ENCODE measurements at regions of chr5 and their contacts with region 1.

Region 1: DNA sequence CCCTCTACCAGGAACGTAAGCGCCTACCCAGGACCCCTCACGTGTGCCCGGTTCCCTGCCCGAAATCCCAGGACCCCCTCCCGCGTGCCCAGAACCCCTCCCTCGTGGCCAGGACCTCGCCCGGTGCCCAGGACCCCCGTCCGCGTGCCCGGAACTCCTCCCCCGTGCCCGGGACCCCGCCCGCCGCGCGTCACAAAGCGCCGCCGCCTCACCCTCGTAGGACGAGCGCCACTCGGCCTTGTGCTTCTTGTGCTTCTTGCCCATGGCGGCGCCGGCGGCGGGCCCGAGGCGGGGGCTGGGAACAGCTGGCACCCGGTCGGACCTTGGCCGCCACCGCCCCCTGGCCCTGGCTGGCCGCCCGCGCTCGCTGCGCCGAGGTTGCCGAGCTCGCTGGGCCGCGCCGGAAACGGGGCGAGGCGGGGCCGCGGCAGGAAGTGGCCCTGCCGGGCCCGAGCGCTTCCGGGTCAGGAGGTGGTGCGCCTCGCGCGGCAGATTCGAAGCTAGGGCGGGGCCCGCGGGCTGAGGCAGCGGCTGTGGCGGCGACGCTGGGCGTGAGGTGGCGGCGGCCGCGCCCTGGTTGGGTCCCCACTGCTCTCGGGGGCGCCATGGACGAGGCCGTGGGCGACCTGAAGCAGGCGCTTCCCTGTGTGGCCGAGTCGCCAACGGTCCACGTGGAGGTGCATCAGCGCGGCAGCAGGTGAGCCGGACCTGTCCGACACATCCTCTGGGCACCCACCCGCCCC is at the starts of genes BRD9 and TRIP13:
- DNase-seq: peak; percentile 96
- H3K4me3 Mint-ChIP-seq: peak within 1 kb of the TSS; percentile 88
- H3K27ac Mint-ChIP-seq: peak within 1 kb of the TSS; percentile 92
- H3K4me1 Mint-ChIP-seq: peaks cover 21% of the 10 kb centered on the region
- H3K27me3 Mint-ChIP-seq: no peaks in the 10 kb centered on the region
- total RNA-seq, gene BRD9: 80.6 and 82.0 TPM in 2 replicates
- total RNA-seq, gene TRIP13: 47.5 and 52.6 TPM in 2 replicates

Region 2: DNA sequence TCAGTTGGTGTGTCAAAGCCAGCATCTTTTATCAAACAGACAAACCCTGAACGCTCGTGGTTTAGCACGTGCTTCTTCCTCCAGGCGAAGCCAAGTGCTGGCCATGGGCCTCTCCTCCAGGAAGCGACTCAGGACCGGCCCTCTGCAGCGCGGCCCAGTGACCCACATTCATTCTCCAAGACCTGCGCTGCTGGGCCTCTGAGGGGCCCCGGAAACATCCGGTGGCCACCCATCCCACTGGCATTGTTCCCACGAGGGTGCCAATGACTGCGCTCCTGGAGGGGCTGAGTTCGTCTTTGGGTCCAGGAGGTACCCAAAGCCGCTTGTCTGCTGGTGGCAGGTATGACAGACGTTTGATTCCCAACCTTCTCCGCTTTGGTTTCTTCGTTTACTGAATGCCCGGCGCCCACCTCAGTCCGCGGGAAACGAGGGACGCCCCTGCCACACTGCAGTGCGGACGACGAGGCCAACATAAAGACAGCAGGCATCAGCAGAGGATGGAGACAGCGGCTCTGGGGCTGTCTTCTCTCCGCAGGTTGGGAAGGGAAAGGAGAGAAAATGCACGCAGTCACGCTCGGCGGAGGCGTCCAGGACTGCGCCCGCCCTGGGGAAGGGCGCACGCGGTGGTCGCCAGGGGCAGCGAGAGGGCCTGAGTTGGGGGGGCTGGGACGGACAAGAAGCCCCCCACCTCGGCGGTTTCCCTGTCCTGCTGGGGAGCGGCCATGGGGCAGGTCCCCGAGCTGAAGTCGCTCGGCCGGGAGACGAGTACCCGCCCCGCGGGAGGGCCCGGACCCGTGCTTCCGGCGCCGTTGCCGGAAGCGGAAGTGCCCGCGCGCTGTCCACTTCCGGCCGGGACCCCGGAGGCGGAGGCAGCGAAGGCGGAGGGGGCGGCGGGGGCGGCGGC is 450.0 kb before region 1 on chr5 and contains the start of gene EXOC3:
- intact Hi-C with region 1: loop called (anchors 10 kb)
- DNase-seq: peak; percentile 95
- H3K4me3 Mint-ChIP-seq: peak within 1 kb of the TSS; percentile 98
- H3K27ac Mint-ChIP-seq: peak within 1 kb of the TSS; percentile 98
- H3K4me1 Mint-ChIP-seq: peaks cover 30% of the 10 kb centered on the region
- H3K27me3 Mint-ChIP-seq: no peaks in the 10 kb centered on the region
- total RNA-seq, gene EXOC3: 64.5 and 67.2 TPM in 2 replicates

Region 3: GRCh38 chr5:1111727-1112289 is 219.2 kb after region 1 on chr5 and contains the start of gene SLC12A7:
- intact Hi-C with region 1: loop called (anchors 1 kb)
- DNase-seq: peak; percentile 93
- H3K4me3 Mint-ChIP-seq: peak within 1 kb of the TSS; percentile 91
- H3K27ac Mint-ChIP-seq: peak within 1 kb of the TSS; percentile 88
- H3K4me1 Mint-ChIP-seq: peaks cover 30% of the 10 kb centered on the region
- H3K27me3 Mint-ChIP-seq: peaks cover 2% of the 10 kb centered on the region
- total RNA-seq, gene SLC12A7: 32.1 and 33.4 TPM in 2 replicates